HepG2 (cell line): ENCODE measurements at regions of chr21 and their contacts with region 1.

Region 1: GRCh38 chr21:42337830-42338728 is 12.7 kb downstream of the TFF2 start:
- DNase-seq: peak; percentile 70
- ATAC-seq: peak; percentile 96
- H3K4me3 ChIP-seq: peak overlapping the region in 2 of 3 experiments; percentile 11 to 59; a peak in 2 of 6 replicates
- H3K27ac ChIP-seq: no peak overlapping the region
- H3K4me1 ChIP-seq: peaks cover 21% of the 10 kb centered on the region
- H3K27me3 ChIP-seq: no peaks in the 10 kb centered on the region; a peak in 2 of 5 replicates
- CTCF ChIP-seq: peak; percentile 87
- EP300 ChIP-seq: no peak
- POLR2A ChIP-seq: no peak
- RAD21 ChIP-seq: peak; percentile 60

Region 2: DNA sequence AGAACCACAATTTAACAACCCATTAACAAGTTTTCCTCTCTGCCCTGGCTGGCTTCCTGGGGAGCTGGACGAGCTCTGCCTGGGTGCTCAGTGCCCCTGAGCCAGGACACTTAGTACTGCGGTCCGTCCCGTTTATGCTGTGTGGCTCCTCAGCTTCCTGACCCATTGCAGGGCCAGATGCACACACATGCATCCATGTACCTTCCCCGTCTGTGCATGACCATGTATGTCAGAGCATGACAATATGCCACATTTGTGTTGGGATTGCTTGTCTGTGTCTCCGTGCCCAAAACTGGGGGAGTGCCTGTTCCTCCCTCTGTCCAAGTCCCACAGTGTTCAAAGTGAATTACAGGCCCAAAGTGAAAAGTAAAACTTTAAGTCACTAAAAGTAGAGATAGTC is 13.2 kb before region 1 on chr21:
- CTCF ChIA-PET with region 1: no interaction called
- POLR2A ChIA-PET with region 1: no interaction called
- in situ Hi-C with region 1: no loop called
- intact Hi-C with region 1: no loop called
- DNase-seq: no peak
- ATAC-seq: no peak
- H3K4me3 ChIP-seq: no peak overlapping the region
- H3K27ac ChIP-seq: no peak overlapping the region
- H3K4me1 ChIP-seq: no peaks in the 10 kb centered on the region; the same call in 1 of the 2 replicates
- H3K27me3 ChIP-seq: peaks cover 1 to 14% of the 10 kb centered on the region in 2 experiments; a peak in 4 of 5 replicates
- CTCF ChIP-seq: no peak
- EP300 ChIP-seq: no peak
- POLR2A ChIP-seq: no peak
- RAD21 ChIP-seq: no peak

Region 3: DNA sequence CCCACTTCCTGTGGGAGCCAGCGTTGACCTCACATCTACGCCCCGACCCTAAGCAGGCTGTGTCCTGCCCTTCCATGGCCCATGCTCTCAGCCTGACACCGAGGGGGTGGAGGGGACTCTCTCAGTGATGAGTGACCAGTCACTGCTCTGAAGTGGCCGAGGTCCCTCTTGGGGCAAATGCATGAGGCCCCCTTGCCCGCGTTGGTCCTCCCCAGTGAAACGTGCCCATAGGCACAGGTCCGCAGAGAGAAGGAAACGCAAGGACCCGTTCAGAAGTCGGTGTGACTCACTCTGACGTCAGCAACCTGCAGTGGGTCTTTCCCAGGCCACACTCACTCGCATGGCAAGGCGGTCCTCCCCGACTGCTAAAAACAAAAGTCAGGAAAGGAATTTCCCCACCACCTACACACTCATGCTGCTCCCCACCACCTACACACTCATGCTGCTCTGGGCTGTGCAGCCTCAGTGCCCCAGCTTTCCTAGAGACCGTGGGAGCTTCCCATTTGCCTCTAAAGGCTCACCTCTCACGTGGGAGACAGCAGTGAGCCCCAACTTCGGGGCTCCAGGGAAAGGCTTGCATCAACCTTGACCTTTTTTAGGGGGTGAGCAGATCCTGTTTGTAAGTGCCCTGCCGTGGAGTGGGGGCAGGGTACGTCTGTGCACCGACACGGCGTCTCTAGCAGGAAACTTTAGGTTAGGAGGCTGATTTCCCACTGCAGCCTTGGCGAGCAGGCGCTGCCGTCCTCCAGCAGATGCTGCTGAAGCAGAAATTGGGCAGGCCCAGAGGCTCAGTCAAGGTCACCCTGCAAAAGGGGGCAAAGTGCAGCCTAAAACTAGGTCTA is 77.1 kb after region 1 on chr21:
- CTCF ChIA-PET with region 1: no interaction called
- POLR2A ChIA-PET with region 1: no interaction called
- in situ Hi-C with region 1: no loop called
- intact Hi-C with region 1: loop called (anchors 1 kb)
- DNase-seq: no peak
- ATAC-seq: peak; percentile 34
- H3K4me3 ChIP-seq: peak overlapping the region in 1 of 3 experiments; percentile 38; a peak in 1 of 6 replicates
- H3K27ac ChIP-seq: no peak overlapping the region
- H3K4me1 ChIP-seq: peaks cover 19% of the 10 kb centered on the region
- H3K27me3 ChIP-seq: peaks cover 1 to 9% of the 10 kb centered on the region in 2 experiments; a peak in 3 of 5 replicates
- CTCF ChIP-seq: no peak
- EP300 ChIP-seq: no peak
- POLR2A ChIP-seq: no peak
- RAD21 ChIP-seq: no peak

Region 4: GRCh38 chr21:42449296-42449927 is 111.3 kb after region 1 on chr21:
- CTCF ChIA-PET with region 1: interaction called, 33 read pairs
- POLR2A ChIA-PET with region 1: no interaction called
- in situ Hi-C with region 1: no loop called
- intact Hi-C with region 1: loop called (anchors 1 kb)
- DNase-seq: no peak
- ATAC-seq: no peak
- H3K4me3 ChIP-seq: no peak overlapping the region
- H3K27ac ChIP-seq: no peak overlapping the region
- H3K4me1 ChIP-seq: peaks cover 4% of the 10 kb centered on the region; the same call in 1 of the 2 replicates
- H3K27me3 ChIP-seq: peaks cover 0 to 9% of the 10 kb centered on the region in 2 experiments; a peak in 2 of 5 replicates
- CTCF ChIP-seq: no peak
- EP300 ChIP-seq: no peak
- POLR2A ChIP-seq: no peak
- RAD21 ChIP-seq: no peak

Region 5: GRCh38 chr21:42454786-42455580 is 116.9 kb after region 1 on chr21:
- CTCF ChIA-PET with region 1: interaction called, 33 read pairs
- POLR2A ChIA-PET with region 1: no interaction called
- in situ Hi-C with region 1: no loop called
- intact Hi-C with region 1: loop called (anchors 1 kb)
- DNase-seq: no peak
- ATAC-seq: no peak
- H3K4me3 ChIP-seq: no peak overlapping the region
- H3K27ac ChIP-seq: no peak overlapping the region
- H3K4me1 ChIP-seq: peaks cover 4% of the 10 kb centered on the region; the same call in 1 of the 2 replicates
- H3K27me3 ChIP-seq: peaks cover 0 to 12% of the 10 kb centered on the region in 2 experiments; a peak in 2 of 5 replicates
- CTCF ChIP-seq: no peak
- EP300 ChIP-seq: no peak
- POLR2A ChIP-seq: no peak
- RAD21 ChIP-seq: no peak